ENCODE measurements at regions of chr5 and their contacts with region 1.

Region 1: GRCh38 chr5:111748304-111748763 is 8.7 kb downstream of the NREP start:
- DNase-seq: no peak
- H3K4me3 Mint-ChIP-seq: no peak overlapping the region
- H3K27ac Mint-ChIP-seq: peak overlapping the region; percentile 73
- H3K4me1 Mint-ChIP-seq: peaks cover 40% of the 10 kb centered on the region
- H3K27me3 Mint-ChIP-seq: no peaks in the 10 kb centered on the region

Region 2: GRCh38 chr5:111735583-111736270 is 12.6 kb before region 1 on chr5:
- intact Hi-C with region 1: loop called (anchors 2 kb)
- DNase-seq: no peak
- H3K4me3 Mint-ChIP-seq: no peak overlapping the region
- H3K27ac Mint-ChIP-seq: peak overlapping the region; percentile 0
- H3K4me1 Mint-ChIP-seq: peaks cover 56% of the 10 kb centered on the region
- H3K27me3 Mint-ChIP-seq: no peaks in the 10 kb centered on the region

Region 3: DNA sequence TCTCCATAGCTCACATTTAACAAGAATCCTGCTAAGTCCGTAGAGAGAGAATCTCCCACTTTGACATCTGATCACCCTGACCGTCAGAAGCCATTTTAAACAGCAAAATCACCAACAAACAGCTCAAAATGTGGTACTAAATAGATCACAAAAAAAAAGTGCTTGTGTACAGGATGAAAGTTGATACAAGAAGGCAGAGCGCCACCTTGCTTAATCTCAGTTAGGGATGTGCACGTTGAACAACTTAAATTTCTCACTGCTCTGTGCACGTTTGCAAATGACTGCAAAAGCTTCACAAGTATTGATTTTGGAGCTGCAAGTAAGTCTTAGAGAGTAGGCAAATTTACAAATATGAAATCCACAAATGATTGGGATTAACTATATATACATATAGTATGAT is 71.7 kb after region 1 on chr5:
- intact Hi-C with region 1: no loop called
- DNase-seq: no peak
- H3K4me3 Mint-ChIP-seq: no peak overlapping the region
- H3K27ac Mint-ChIP-seq: no peak overlapping the region
- H3K4me1 Mint-ChIP-seq: no peaks in the 10 kb centered on the region
- H3K27me3 Mint-ChIP-seq: no peaks in the 10 kb centered on the region